ENCODE measurements at regions of chr18 and their contacts with region 1.

Region 1: GRCh38 chr18:49628881-49629795 is 67.3 kb downstream of the LIPG start:
- DNase-seq: peak; percentile 98
- H3K4me3 ChIP-seq: no peak overlapping the region
- H3K27ac ChIP-seq: peak overlapping the region; percentile 77 to 88 (median 82)
- H3K4me1 ChIP-seq: peaks cover 65 to 88% of the 10 kb centered on the region in 2 donors
- H3K27me3 ChIP-seq: no peaks in the 10 kb centered on the region
- CTCF ChIP-seq: peak in 4 of 6 experiments; percentile 42 to 60 (median 52)
- POLR2A ChIP-seq: no peak

Region 2: GRCh38 chr18:49500201-49500921 is 128.8 kb before region 1 on chr18:
- intact Hi-C with region 1: no loop called
- DNase-seq: no peak
- H3K4me3 ChIP-seq: no peak overlapping the region
- H3K27ac ChIP-seq: no peak overlapping the region
- H3K4me1 ChIP-seq: no peaks in the 10 kb centered on the region
- H3K27me3 ChIP-seq: no peaks in the 10 kb centered on the region
- CTCF ChIP-seq: no peak
- POLR2A ChIP-seq: no peak

Region 3: DNA sequence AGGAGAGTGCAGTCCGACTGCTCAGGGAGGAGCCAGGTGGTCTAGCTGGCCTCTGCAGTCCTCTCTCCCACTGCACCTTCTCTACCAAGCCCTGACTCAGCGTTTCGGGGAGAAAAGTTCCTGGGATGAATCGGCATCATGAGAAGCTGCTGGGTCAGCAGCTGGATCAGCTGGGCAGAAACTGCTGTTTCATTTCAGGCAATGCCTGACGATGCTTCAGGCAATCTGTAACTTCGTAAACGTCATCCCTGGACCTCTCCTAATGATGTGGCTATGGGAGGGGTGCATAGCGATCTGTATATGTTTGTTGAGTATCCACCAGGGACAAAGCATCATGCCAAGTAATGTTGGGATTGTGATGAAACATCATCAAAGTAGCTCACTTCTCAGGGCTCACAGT is 46.6 kb before region 1 on chr18:
- intact Hi-C with region 1: loop called (anchors 10 kb)
- DNase-seq: peak in 1 of 2 donors; percentile 39
- H3K4me3 ChIP-seq: no peak overlapping the region
- H3K27ac ChIP-seq: peak overlapping the region in 1 of 3 donors; percentile 87
- H3K4me1 ChIP-seq: peaks cover 38 to 49% of the 10 kb centered on the region in 2 donors
- H3K27me3 ChIP-seq: no peaks in the 10 kb centered on the region
- CTCF ChIP-seq: no peak
- POLR2A ChIP-seq: no peak

Region 4: DNA sequence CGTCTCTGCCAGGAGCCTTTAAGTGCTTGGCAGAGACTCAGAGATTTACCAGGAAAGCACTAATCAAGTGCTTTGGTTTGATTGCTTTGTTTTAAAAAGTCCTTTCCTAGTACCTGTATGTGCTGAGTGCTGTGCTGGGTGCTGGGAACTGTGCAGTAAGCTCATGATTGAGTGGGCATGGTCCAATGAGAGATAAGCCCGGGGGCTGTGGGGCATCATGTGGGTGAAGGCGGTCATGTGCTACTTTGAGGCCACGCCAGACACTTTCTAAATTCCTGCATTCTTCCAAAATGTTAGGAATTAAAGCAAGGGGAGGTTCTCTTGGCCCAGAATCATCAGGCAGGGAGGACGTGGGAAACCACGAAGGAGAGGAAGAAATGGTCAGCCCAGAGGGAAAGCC is 75.2 kb after region 1 on chr18:
- intact Hi-C with region 1: loop called (anchors 10 kb)
- DNase-seq: peak; percentile 94 to 95
- H3K4me3 ChIP-seq: no peak overlapping the region
- H3K27ac ChIP-seq: peak overlapping the region; percentile 53 to 86 (median 85)
- H3K4me1 ChIP-seq: peaks cover 37 to 46% of the 10 kb centered on the region in 2 donors
- H3K27me3 ChIP-seq: no peaks in the 10 kb centered on the region
- CTCF ChIP-seq: no peak
- POLR2A ChIP-seq: no peak